GM10248 (cell line): ENCODE measurements at regions of chr3 and their contacts with region 1.

Region 1: GRCh38 chr3:124032648-124033359 is 40.9 kb upstream of the ROPN1 start:
- DNase-seq: peak; percentile 88
- CTCF ChIP-seq: peak; percentile 80

Region 2: GRCh38 chr3:124014366-124014942 is 18.4 kb before region 1 on chr3:
- CTCF ChIA-PET with region 1: interaction called, 12 read pairs
- POLR2A ChIA-PET with region 1: no interaction called
- DNase-seq: no peak
- CTCF ChIP-seq: no peak

Region 3: GRCh38 chr3:124044956-124045355 is 12.2 kb after region 1 on chr3:
- CTCF ChIA-PET with region 1: interaction called, 21 read pairs
- POLR2A ChIA-PET with region 1: no interaction called
- DNase-seq: no peak
- CTCF ChIP-seq: no peak

Region 4: GRCh38 chr3:124063197-124063909 is 30.5 kb after region 1 on chr3:
- CTCF ChIA-PET with region 1: interaction called, 11 read pairs
- POLR2A ChIA-PET with region 1: no interaction called
- DNase-seq: no peak
- CTCF ChIP-seq: no peak

Region 5: DNA sequence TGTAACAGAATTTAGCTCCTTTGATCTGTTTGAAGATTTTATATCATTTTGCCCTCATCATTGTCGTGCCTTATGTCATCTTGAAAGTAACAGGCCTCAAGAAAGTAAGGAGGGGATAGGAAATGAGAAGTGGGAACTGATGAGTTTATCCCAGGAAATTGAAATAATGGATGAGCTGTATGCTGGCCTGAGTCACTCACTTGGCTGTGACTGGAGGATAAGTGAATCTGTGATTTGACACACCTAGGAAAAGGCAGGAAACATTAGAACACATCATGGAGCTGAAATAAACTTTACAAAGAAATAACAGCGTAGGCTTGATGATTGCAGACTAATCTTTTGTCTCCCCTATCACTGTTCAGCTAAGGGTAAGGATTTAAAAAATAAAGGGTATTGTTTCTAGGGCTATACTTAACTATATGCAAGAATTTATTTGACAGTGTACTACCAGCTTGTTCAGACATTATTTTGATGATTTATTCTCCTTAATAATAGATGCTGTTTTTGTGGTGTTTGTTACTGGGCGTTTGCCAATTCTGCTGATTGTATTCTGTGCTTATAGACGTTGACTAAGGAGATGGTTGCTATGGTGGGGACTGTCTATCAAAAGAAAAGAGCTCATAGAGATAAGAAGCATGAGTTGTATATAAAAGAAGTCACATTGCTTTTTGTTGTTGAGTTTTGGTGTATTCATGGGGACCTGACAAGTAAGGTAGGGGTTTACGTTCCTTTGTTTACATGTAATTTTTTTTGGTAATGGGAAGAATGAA is 64.7 kb after region 1 on chr3:
- CTCF ChIA-PET with region 1: interaction called, 10 read pairs
- POLR2A ChIA-PET with region 1: no interaction called
- DNase-seq: no peak
- CTCF ChIP-seq: no peak

Region 6: GRCh38 chr3:124467980-124468902 is 435.4 kb after region 1 on chr3:
- CTCF ChIA-PET with region 1: no interaction called
- POLR2A ChIA-PET with region 1: no interaction called
- DNase-seq: peak; percentile 68
- CTCF ChIP-seq: peak; percentile 95